ENCODE measurements at regions of chr21 and their contacts with region 1.

Region 1: GRCh38 chr21:42818328-42818749 is 61.0 kb downstream of the WDR4 start:
- DNase-seq: peak; percentile 43 to 66
- H3K4me3 ChIP-seq: no peak overlapping the region
- H3K27ac ChIP-seq: no peak overlapping the region
- H3K4me1 ChIP-seq: no peaks in the 10 kb centered on the region
- H3K27me3 ChIP-seq: no peaks in the 10 kb centered on the region
- CTCF ChIP-seq: peak; percentile 81 to 88 (median 84)
- POLR2A ChIP-seq: no peak

Region 2: GRCh38 chr21:41460578-41461527 is 1357.5 kb before region 1 on chr21:
- intact Hi-C with region 1: no loop called
- DNase-seq: peak; percentile 69 to 79
- H3K4me3 ChIP-seq: no peak overlapping the region
- H3K27ac ChIP-seq: no peak overlapping the region
- H3K4me1 ChIP-seq: no peaks in the 10 kb centered on the region
- H3K27me3 ChIP-seq: no peaks in the 10 kb centered on the region
- CTCF ChIP-seq: peak; percentile 67 to 87 (median 87)
- POLR2A ChIP-seq: no peak

Region 3: GRCh38 chr21:41828481-41829360 is 989.6 kb before region 1 on chr21:
- intact Hi-C with region 1: loop called (anchors 10 kb)
- DNase-seq: no peak
- H3K4me3 ChIP-seq: no peak overlapping the region
- H3K27ac ChIP-seq: no peak overlapping the region
- H3K4me1 ChIP-seq: no peaks in the 10 kb centered on the region
- H3K27me3 ChIP-seq: no peaks in the 10 kb centered on the region
- CTCF ChIP-seq: no peak
- POLR2A ChIP-seq: no peak

Region 4: DNA sequence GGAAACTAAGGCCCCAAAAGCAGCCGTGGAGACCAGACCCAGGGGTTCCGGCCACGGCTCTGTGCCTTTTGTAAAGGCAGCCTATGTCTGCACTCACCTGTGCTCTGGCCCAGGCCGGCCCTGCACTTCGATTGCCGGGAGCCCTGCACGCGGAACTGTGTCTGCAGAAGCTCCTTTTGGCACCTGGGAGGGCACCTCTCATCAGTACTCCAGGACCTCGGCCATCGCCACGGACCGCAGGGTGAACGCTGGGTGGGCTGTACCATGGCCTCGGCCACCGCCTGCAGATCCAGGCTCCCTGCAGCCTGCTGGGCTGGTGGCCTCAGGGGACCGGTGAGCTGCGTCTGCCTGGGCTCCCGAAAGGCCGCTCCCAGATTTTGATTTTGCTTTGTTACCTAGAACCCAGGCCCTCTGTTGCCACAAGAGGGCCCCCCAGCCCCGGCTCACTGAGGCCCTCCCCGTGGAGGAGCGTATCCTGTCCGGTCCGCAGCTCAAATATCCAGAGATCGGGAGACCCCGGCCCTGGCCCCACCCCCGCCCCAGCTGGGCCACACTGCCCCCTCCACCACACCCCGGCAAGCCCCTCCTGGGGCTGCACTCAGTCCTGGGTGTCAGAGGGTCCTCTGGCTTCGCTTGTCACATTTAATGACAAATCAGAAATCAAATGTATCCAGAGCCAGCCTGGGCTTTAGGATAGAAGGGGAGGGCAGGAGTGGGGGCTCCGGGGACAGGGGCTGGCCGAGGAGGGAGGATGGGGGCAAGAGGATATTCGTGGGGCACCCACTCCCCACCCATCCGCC is 225.1 kb before region 1 on chr21:
- intact Hi-C with region 1: loop called (anchors 10 kb)
- DNase-seq: peak; percentile 62 to 70
- H3K4me3 ChIP-seq: peak overlapping the region in 2 of 3 donors; percentile 11 to 51
- H3K27ac ChIP-seq: no peak overlapping the region
- H3K4me1 ChIP-seq: no peaks in the 10 kb centered on the region
- H3K27me3 ChIP-seq: no peaks in the 10 kb centered on the region
- CTCF ChIP-seq: peak; percentile 18 to 69 (median 51)
- POLR2A ChIP-seq: no peak